Panc1 (cell line): ENCODE measurements at regions of chr15 and their contacts with region 1.

Region 1: GRCh38 chr15:91897585-91898372 is 44.3 kb downstream of the SLCO3A1 start:
- DNase-seq: no peak
- ATAC-seq: no peak
- H3K4me3 ChIP-seq: no peak overlapping the region
- H3K27ac ChIP-seq: no peak overlapping the region
- H3K4me1 ChIP-seq: no peaks in the 10 kb centered on the region
- H3K27me3 ChIP-seq: no peaks in the 10 kb centered on the region
- CTCF ChIP-seq: no peak

Region 2: DNA sequence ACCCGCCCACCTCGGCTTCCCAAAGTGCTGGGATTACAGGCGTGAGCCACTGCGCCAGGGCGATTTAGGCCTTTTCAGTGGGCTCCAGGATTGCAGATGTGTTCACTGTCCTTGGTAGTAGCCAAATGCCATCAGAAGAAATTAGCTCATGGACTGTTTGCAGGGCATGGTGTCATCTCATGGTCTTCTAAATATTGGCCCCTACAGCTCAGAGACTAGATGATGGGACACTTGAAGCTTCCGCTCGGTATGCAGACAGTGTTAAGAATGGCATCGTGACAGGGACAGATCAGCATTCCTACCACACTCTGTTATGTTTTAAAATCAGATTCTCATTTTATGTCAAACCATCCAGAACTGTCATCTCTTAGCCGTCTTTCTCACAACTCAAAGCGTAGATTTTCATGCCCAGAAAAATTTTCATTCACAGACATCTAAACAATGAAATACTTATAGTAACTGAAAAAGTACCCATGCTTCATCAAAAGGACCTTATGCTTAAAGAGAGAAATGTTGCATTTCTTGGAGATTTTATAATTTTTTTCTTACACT is 19.4 kb before region 1 on chr15:
- CTCF ChIA-PET with region 1: no interaction called
- POLR2A ChIA-PET with region 1: interaction called, 16 read pairs
- in situ Hi-C with region 1: no loop called
- intact Hi-C with region 1: no loop called
- DNase-seq: no peak
- ATAC-seq: no peak
- H3K4me3 ChIP-seq: no peak overlapping the region
- H3K27ac ChIP-seq: no peak overlapping the region
- H3K4me1 ChIP-seq: no peaks in the 10 kb centered on the region
- H3K27me3 ChIP-seq: no peaks in the 10 kb centered on the region
- CTCF ChIP-seq: no peak